ENCODE measurements at regions of chr11 and their contacts with region 1.

Region 1: DNA sequence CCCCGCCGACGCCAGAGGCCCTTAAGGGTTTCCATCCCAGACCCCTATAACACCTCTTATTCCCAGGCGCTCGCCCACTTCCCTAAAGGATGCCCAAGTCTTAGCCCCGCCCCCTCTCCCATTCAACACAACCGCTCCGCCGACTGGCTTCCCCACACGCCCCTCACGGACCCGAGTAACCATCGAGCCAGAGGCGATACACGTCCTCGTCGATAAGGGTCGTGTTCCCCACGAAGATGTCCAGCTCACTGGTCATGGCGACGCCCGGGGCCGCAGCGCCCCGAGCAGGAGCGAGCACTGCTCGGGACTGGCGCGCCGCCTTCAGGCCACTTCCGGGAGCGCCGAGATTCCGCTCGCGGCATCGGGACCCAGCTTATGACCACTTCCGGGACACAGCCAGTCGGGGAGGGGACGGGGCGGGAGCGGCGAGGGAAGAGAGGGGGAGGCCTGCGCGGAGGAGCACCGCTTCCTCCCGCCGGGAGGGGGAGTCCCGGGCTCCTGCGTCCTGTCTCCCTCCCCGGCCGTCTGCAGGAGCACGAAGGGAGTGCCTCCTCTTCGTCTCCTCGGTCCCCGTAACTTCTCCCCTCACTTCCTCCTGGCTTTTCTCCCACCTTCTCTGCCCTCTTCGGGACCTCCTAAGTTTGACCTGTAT is at the start of gene FIBP:
- DNase-seq: peak; percentile 97
- H3K4me3 ChIP-seq: peak within 1 kb of the TSS; percentile 93
- H3K27ac ChIP-seq: peak within 1 kb of the TSS; percentile 80
- H3K4me1 ChIP-seq: peaks cover 64% of the 10 kb centered on the region
- CTCF ChIP-seq: peak; percentile 81
- total RNA-seq, gene FIBP: 133 and 184 TPM in 2 replicates

Region 2: DNA sequence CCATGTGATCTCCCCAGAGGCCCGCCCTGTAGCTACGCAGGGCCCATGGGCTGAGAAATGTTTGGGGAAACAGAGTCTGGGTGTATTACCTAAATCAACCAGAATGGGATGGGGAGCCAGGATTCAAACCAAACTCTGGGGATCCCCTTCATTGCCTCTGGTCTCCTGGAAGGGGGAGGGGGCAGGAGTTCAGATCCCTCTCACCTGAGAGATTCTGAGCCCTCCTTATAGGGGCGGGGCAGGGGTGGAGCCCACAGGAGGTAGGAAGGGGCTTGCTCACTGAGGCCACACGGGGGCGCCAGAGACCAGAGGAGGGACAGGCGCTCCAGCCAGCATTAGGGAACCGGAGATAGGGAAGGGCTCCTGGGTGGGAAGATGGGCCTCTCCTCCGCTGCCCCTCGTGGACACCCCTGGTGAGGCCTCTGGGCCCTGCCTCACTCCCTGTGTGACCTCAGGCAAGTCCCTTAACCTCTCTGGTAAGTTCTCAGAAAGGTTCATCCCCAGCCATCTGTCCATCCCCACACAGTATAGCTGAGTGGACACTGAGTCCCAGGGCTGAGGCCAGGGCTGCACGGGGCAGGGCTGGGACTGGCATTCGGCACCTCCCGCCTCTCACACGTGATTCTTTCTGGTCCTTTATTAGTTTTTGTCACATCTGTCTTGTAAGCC is 1041.2 kb before region 1 on chr11:
- CTCF ChIA-PET with region 1: no interaction called
- POLR2A ChIA-PET with region 1: no interaction called
- intact Hi-C with region 1: no loop called
- DNase-seq: peak; percentile 88
- H3K4me3 ChIP-seq: no peak overlapping the region
- H3K27ac ChIP-seq: peak overlapping the region; percentile 92
- H3K4me1 ChIP-seq: peaks cover 73% of the 10 kb centered on the region
- CTCF ChIP-seq: peak; percentile 93

Region 3: GRCh38 chr11:65802841-65803240 is 85.4 kb before region 1 on chr11:
- CTCF ChIA-PET with region 1: interaction called, 14 read pairs
- POLR2A ChIA-PET with region 1: no interaction called
- intact Hi-C with region 1: no loop called
- DNase-seq: peak; percentile 29
- H3K4me3 ChIP-seq: no peak overlapping the region
- H3K27ac ChIP-seq: no peak overlapping the region
- H3K4me1 ChIP-seq: peaks cover 6% of the 10 kb centered on the region
- CTCF ChIP-seq: no peak

Region 4: DNA sequence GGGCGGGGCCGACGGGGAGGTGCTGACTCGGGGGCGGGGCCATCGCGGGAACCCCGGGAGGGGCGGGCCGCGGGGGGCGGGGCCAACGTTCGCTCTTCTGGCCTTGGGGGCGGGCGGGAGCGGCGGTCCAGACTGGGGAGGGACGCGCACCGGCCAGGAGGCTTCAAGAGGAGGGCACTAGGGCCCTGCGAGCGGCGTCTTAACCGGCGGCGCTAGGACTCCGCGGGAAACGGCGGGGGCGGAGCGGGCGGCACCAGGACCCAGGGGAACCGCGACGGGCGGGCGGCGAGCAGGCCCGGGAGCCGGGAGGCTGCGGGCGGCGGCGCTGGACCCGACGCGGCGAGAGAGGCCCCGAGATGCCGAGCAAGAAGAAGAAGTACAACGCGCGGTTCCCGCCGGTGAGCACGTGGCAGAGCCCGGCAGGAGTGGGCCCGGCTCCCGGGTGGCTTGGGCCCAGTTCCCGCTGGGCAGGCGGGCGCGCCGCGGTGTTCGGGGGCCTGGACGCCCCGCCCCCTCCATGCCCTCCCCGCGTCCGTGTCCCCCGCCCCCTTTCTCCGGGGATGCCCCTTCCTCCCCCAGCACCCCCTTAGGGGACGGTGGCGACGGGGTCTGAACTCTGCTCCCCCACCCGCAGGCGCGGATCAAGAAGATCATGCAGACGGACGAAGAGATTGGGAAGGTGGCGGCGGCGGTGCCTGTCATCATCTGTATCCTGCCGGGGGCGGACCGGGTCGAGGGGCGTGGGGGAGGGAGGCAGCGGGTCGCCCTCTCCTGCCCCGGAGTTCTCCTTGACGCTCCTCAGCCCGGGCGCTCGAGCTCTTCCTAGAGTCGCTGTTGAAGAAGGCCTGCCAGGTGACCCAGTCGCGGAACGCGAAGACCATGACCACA is 31.1 kb after region 1 on chr11 and contains the start of gene DRAP1:
- CTCF ChIA-PET with region 1: interaction called, 4 read pairs
- POLR2A ChIA-PET with region 1: interaction called, 6 read pairs
- intact Hi-C with region 1: loop called (anchors 2 kb)
- DNase-seq: peak; percentile 99
- H3K4me3 ChIP-seq: peak within 1 kb of the TSS; percentile 85
- H3K27ac ChIP-seq: peak within 1 kb of the TSS; percentile 54
- H3K4me1 ChIP-seq: peaks cover 22% of the 10 kb centered on the region
- CTCF ChIP-seq: no peak
- total RNA-seq, gene DRAP1: 93.2 and 110 TPM in 2 replicates

Region 5: DNA sequence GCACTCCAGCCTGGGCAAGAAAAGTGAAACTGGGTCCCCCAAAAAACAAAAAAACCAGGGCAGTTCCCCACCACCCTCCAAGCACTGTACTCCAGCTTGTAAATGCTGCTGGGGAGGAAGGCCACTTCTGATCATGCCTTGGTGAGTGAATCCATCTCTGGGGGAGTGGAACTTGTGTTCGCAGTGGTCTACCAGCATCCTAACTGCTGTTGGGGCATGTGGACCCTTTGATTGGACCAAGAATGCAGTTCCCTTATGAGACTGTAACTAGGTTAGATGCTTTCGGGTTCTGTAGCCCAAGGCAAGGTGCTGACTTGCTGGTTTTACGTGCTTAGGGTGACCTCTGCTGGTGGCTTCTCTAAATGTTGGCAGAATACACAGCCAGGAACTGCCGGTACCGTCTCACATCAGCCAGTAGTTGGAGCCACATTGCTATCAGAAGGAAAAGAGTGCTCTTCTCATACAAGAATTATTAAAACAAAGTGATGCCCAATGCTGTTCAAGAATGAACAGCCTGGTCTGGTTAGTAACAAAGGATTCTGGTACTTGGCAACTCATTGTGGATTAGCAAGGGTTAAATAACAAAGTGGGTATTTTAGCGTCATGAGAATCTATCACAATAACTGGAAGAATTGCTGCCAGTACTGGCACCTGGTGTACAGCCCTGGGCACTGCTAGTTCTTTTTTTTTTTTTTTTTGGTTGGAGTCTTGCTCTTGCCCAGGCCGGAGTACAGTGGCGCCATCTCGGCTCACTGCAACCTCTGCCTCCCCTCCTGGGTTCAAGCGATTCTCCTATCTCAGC is 100.7 kb after region 1 on chr11:
- CTCF ChIA-PET with region 1: no interaction called
- POLR2A ChIA-PET with region 1: interaction called, 3 read pairs
- intact Hi-C with region 1: loop called (anchors 1 kb)
- DNase-seq: peak; percentile 94
- H3K4me3 ChIP-seq: no peak overlapping the region
- H3K27ac ChIP-seq: no peak overlapping the region
- H3K4me1 ChIP-seq: no peaks in the 10 kb centered on the region
- CTCF ChIP-seq: peak; percentile 100

Region 6: DNA sequence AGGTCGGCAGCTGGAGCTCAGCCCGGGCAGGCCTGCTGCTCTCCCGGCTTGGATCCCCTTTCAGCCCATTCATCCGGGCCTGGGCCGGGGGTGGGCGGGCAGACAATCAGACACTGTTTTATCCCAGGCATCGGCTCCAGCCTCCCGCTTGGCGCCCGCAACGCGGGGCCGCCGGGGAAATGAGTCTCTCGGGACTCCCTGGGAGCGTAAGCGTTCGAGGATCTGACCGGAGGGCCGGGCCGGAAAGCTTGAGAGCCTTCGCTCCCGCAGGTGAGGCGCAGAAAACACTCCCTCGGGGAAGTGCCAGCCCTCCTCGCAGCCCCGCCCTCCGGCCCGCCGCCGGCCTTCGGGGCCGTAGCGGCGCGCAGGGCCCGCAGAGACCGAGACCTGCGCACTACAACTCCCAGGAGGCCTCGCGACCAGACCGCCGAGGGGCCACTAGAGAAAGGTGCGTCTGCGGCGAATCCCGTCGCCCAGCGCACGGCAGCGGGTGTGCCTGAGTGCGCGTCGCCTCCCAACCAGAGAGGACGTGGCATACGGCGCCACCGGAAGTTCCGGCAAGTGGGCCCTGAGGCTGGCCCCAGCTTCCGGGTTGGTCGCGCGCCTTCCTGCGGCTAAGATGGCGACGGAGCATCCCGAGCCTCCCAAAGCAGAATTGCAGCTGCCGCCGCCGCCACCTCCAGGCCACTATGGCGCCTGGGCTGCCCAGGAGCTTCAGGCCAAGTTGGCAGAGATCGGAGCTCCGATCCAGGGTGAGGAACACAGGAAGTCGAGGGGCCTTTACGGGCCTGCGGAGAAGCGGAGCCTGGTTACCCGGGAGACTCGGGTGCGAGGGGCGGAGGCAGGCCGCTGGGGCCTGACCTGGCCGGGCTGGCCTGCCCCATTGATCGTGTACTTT is 163.7 kb after region 1 on chr11 and contains the start of gene SF3B2:
- CTCF ChIA-PET with region 1: no interaction called
- POLR2A ChIA-PET with region 1: interaction called, 3 read pairs
- intact Hi-C with region 1: loop called (anchors 5 kb)
- DNase-seq: peak; percentile 99
- H3K4me3 ChIP-seq: peak within 1 kb of the TSS; percentile 83
- H3K27ac ChIP-seq: peak within 1 kb of the TSS; percentile 60
- H3K4me1 ChIP-seq: peaks cover 21% of the 10 kb centered on the region
- CTCF ChIP-seq: no peak
- total RNA-seq, gene SF3B2: 185 and 191 TPM in 2 replicates

Region 7: GRCh38 chr11:66136752-66137123 is 248.4 kb after region 1 on chr11:
- CTCF ChIA-PET with region 1: interaction called, 4 read pairs
- POLR2A ChIA-PET with region 1: no interaction called
- intact Hi-C with region 1: loop called (anchors 5 kb)
- DNase-seq: no peak
- H3K4me3 ChIP-seq: no peak overlapping the region
- H3K27ac ChIP-seq: no peak overlapping the region
- H3K4me1 ChIP-seq: peaks cover 59% of the 10 kb centered on the region
- CTCF ChIP-seq: no peak

Region 8: GRCh38 chr11:66183494-66184048 is 295.3 kb after region 1 on chr11:
- CTCF ChIA-PET with region 1: no interaction called
- POLR2A ChIA-PET with region 1: no interaction called
- intact Hi-C with region 1: no loop called
- DNase-seq: peak; percentile 8
- H3K4me3 ChIP-seq: no peak overlapping the region
- H3K27ac ChIP-seq: no peak overlapping the region
- H3K4me1 ChIP-seq: no peaks in the 10 kb centered on the region
- CTCF ChIP-seq: no peak

Region 9: DNA sequence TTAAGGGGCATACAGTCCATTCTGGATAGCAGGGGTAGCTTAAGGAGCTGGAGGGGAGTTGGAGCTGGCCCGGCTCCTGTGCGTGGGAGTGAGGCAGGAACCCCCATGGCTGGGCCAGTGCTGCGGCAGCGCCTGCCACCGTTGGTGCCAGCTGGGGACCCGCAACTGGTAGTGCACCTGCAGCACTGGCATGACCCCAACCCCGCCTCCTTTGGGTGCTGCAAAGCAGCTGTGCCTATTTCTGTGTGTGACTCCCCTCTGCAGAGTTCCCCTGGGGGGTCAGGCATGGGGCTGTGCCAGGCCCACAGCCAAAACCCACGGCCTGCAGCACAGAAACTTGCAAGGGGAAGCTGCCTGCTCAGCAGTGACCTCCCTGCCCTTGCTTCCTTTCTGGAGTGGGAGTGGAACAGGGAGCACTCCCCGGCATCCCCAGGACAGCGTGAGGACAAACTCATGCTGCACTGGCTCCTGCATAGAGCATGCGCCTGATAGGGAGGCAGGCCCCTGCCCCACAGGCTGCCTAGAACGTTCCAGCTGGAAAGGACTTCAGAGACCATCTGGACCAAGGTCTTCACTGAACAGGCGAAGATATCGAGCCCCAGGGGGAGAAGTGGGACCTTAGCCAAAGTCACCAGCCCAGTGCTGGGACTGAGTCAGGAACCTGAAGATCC is 353.9 kb after region 1 on chr11:
- CTCF ChIA-PET with region 1: no interaction called
- POLR2A ChIA-PET with region 1: no interaction called
- intact Hi-C with region 1: no loop called
- DNase-seq: no peak
- H3K4me3 ChIP-seq: no peak overlapping the region
- H3K27ac ChIP-seq: no peak overlapping the region
- H3K4me1 ChIP-seq: no peaks in the 10 kb centered on the region
- CTCF ChIP-seq: no peak